Activated naive CD4-positive, alpha-beta T cell treated with anti-CD3 and anti-CD28 coated beads for 36 hours (primary cell): ENCODE measurements at regions of chr6 and their contacts with region 1.

Region 1: DNA sequence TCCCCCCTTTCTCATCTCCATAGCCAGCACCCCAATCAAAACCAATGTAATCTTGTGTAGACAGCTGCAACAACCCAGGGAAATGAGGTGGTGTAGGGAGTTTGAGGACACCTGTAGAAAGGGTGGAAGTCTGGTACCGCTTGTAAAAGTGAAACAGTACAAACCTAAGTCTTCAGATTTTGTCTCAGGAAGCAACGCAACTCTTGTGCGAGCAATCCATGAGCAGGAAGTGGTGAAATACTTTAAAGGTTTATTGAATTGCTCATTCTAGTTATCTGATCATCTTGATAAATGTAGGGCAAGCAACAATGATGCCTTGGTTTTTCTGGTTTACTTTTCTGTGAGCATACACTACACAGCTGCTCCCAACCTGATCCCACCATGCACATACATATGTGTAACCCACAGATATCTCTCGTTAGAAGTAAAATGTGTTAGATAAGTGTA is 71.1 kb upstream of the THEMIS start:
- DNase-seq: peak; percentile 62
- H3K4me3 Mint-ChIP-seq: peak overlapping the region; percentile 72
- H3K27ac Mint-ChIP-seq: peak overlapping the region; percentile 88
- H3K4me1 Mint-ChIP-seq: peaks cover 63% of the 10 kb centered on the region
- H3K27me3 Mint-ChIP-seq: no peaks in the 10 kb centered on the region

Region 2: GRCh38 chr6:127484212-127484858 is 487.6 kb before region 1 on chr6:
- CTCF ChIA-PET with region 1: no interaction called
- intact Hi-C with region 1: loop called (anchors 10 kb)
- DNase-seq: peak; percentile 11
- H3K4me3 Mint-ChIP-seq: no peak overlapping the region
- H3K27ac Mint-ChIP-seq: no peak overlapping the region
- H3K4me1 Mint-ChIP-seq: peaks cover 28% of the 10 kb centered on the region
- H3K27me3 Mint-ChIP-seq: peaks cover 4% of the 10 kb centered on the region

Region 3: GRCh38 chr6:127900935-127901334 is 71.0 kb before region 1 on chr6 and contains the start of gene THEMIS:
- CTCF ChIA-PET with region 1: interaction called, 4 read pairs
- intact Hi-C with region 1: loop called (anchors 1 kb)
- DNase-seq: peak; percentile 52
- H3K4me3 Mint-ChIP-seq: peak within 1 kb of the TSS; percentile 81
- H3K27ac Mint-ChIP-seq: peak within 1 kb of the TSS; percentile 94
- H3K4me1 Mint-ChIP-seq: peaks cover 57% of the 10 kb centered on the region
- H3K27me3 Mint-ChIP-seq: no peaks in the 10 kb centered on the region
- total RNA-seq, gene THEMIS: 7.0 to 7.4 TPM

Region 4: GRCh38 chr6:127938701-127939100 is 33.3 kb before region 1 on chr6:
- CTCF ChIA-PET with region 1: interaction called, 3 read pairs
- intact Hi-C with region 1: loop called (anchors 1 kb)
- DNase-seq: no peak
- H3K4me3 Mint-ChIP-seq: no peak overlapping the region
- H3K27ac Mint-ChIP-seq: no peak overlapping the region
- H3K4me1 Mint-ChIP-seq: peaks cover 60% of the 10 kb centered on the region
- H3K27me3 Mint-ChIP-seq: no peaks in the 10 kb centered on the region

Region 5: GRCh38 chr6:128259730-128260685 is 288.0 kb after region 1 on chr6:
- CTCF ChIA-PET with region 1: no interaction called
- intact Hi-C with region 1: loop called (anchors 1 kb)
- DNase-seq: no peak
- H3K4me3 Mint-ChIP-seq: peak overlapping the region; percentile 60
- H3K27ac Mint-ChIP-seq: peak overlapping the region; percentile 46
- H3K4me1 Mint-ChIP-seq: peaks cover 22% of the 10 kb centered on the region
- H3K27me3 Mint-ChIP-seq: no peaks in the 10 kb centered on the region

Region 6: GRCh38 chr6:129490521-129491245 is 1518.7 kb after region 1 on chr6:
- CTCF ChIA-PET with region 1: no interaction called
- intact Hi-C with region 1: loop called (anchors 5 kb)
- DNase-seq: peak; percentile 79
- H3K4me3 Mint-ChIP-seq: peak overlapping the region; percentile 67
- H3K27ac Mint-ChIP-seq: peak overlapping the region; percentile 100
- H3K4me1 Mint-ChIP-seq: peaks cover 70% of the 10 kb centered on the region
- H3K27me3 Mint-ChIP-seq: no peaks in the 10 kb centered on the region